ENCODE measurements at regions of chr1 and their contacts with region 1.

Region 1: DNA sequence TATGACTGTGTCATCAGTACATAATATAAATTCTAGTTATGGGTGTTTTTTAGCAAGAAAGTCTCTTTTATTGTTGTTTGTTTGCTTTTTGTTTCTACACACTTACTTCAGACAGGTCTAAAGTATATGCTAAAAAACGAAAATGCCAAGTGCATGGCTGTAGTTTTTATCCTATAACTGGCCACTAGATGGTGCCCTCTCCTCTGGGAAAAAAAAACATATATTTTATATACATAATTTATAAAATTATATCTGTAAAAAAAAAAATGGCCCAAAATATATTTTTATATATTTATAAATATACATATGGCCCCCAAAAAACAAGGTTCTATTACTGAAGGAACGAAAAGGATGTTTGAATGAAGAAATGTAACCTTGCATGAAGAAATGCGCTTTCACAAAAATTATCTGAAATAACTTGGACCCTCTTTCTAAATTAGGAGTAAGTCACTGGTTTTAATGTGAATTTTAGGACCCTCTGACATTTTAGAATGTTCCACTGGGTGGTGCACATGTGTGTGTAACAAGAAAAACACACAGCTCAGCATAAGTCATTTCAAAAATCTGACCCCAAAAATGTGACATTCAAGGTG is 93.5 kb downstream of the TTLL7 start:
- DNase-seq: peak in 1 of 2 experiments; percentile 9
- H3K4me3 ChIP-seq: no peak overlapping the region
- H3K4me1 ChIP-seq: no peaks in the 10 kb centered on the region
- H3K27me3 ChIP-seq: no peaks in the 10 kb centered on the region

Region 2: GRCh38 chr1:84122780-84123382 is 217.5 kb after region 1 on chr1:
- in situ Hi-C with region 1: loop called (anchors 25 kb)
- DNase-seq: peak; percentile 15 to 55
- H3K4me3 ChIP-seq: no peak overlapping the region
- H3K4me1 ChIP-seq: no peaks in the 10 kb centered on the region
- H3K27me3 ChIP-seq: no peaks in the 10 kb centered on the region

Region 3: GRCh38 chr1:84433258-84434080 is 528.1 kb after region 1 on chr1:
- in situ Hi-C with region 1: loop called (anchors 25 kb)
- DNase-seq: peak; percentile 65 to 73
- H3K4me3 ChIP-seq: 0 out of 2 replicates have a peak overlapping the region, but pooled peaks have one; percentile 7
- H3K4me1 ChIP-seq: peaks cover 10% of the 10 kb centered on the region
- H3K27me3 ChIP-seq: no peaks in the 10 kb centered on the region

Region 4: GRCh38 chr1:84620720-84621313 is 715.4 kb after region 1 on chr1:
- in situ Hi-C with region 1: loop called (anchors 25 kb)
- DNase-seq: peak; percentile 57 to 87
- H3K4me3 ChIP-seq: peak overlapping the region; percentile 46
- H3K4me1 ChIP-seq: peaks cover 8% of the 10 kb centered on the region
- H3K27me3 ChIP-seq: no peaks in the 10 kb centered on the region

Region 5: GRCh38 chr1:84753516-84754385 is 848.3 kb after region 1 on chr1:
- in situ Hi-C with region 1: loop called (anchors 25 kb)
- DNase-seq: peak; percentile 64 to 88
- H3K4me3 ChIP-seq: no peak overlapping the region
- H3K4me1 ChIP-seq: 0 out of 2 replicates have a peak, but pooled peaks cover 5% of the 10 kb centered on the region
- H3K27me3 ChIP-seq: no peaks in the 10 kb centered on the region

Measured in HAP-1 (cell line).